ENCODE measurements at regions of chr15 and their contacts with region 1.

Region 1: DNA sequence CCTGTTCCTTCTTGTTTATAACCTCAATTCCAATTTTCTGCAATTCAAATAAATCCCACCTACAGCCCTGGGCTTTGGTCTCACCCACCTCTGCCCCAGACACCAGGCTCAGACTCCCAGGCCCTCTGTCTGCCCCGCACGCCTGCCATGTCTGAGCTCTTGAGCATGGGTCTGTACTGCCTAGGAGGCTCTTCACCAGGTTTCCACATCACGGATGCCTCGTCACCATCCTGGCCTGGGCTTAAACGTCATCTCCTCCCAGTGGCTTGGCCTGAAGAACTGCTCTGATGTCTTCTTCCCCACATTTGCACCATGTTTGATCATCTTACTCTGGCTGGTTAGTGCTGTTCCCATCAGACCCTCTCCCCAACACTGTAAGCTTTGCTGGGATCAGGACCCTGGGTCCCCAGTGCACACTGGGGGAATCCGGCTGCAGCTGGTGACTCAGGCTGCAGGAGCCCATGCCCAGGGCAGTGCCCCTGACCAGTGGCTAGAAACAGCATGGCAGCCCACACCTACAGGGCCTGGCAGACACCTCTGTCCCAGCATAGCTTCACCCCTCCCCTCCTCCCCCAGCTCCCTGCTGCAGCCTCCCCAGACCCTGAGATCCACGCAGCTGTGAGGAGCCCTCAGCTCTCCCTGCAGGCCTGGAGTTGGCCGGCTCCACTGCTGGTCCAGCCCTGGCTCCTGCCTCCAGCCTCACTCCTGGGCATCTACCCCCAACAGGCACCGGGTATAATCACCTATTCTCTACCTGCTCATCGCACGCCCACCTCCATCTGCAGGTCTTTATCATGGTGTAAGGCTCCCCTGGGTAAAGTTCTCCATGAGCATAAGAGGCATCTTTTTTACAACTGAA is 162.8 kb upstream of the NSMCE3 start:
- DNase-seq: no peak
- H3K4me3 ChIP-seq: no peak overlapping the region
- H3K27ac ChIP-seq: no peak overlapping the region
- H3K4me1 ChIP-seq: peaks cover 0 to 5% (median 3%) of the 10 kb centered on the region in 4 experiments; a peak in 3 of 7 replicates
- H3K27me3 ChIP-seq: no peaks in the 10 kb centered on the region
- CTCF ChIP-seq: no peak
- EP300 ChIP-seq: no peak
- POLR2A ChIP-seq: no peak
- RAD21 ChIP-seq: no peak

Region 2: DNA sequence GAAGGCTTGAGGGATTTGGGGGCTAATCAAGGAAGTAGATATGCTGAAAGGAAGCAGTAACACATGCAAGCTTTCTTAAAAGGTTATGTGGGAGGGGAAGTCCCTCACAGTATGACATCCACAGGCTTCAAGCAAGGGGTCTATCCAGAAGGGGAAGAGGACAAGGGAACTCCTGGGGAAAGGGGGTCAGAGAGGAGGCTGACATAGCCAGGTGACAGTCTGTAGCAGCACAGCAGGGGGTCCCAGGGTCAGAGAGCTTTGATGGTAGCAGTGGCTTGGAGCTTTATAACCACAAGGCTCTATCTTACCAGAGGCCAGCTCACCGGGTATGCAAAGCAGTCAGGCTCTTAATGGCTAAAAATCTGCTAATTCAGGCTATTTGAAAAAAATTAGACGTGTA is 12.2 kb before region 1 on chr15:
- CTCF ChIA-PET with region 1: interaction called, 11 read pairs
- POLR2A ChIA-PET with region 1: interaction called, 3 read pairs
- DNase-seq: no peak
- H3K4me3 ChIP-seq: no peak overlapping the region
- H3K27ac ChIP-seq: no peak overlapping the region
- H3K4me1 ChIP-seq: peaks cover 0 to 17% (median 3%) of the 10 kb centered on the region in 4 experiments; a peak in 5 of 7 replicates
- H3K27me3 ChIP-seq: no peaks in the 10 kb centered on the region
- CTCF ChIP-seq: no peak
- EP300 ChIP-seq: no peak
- POLR2A ChIP-seq: no peak
- RAD21 ChIP-seq: no peak